ENCODE measurements at regions of chr9 and their contacts with region 1.

Region 1: DNA sequence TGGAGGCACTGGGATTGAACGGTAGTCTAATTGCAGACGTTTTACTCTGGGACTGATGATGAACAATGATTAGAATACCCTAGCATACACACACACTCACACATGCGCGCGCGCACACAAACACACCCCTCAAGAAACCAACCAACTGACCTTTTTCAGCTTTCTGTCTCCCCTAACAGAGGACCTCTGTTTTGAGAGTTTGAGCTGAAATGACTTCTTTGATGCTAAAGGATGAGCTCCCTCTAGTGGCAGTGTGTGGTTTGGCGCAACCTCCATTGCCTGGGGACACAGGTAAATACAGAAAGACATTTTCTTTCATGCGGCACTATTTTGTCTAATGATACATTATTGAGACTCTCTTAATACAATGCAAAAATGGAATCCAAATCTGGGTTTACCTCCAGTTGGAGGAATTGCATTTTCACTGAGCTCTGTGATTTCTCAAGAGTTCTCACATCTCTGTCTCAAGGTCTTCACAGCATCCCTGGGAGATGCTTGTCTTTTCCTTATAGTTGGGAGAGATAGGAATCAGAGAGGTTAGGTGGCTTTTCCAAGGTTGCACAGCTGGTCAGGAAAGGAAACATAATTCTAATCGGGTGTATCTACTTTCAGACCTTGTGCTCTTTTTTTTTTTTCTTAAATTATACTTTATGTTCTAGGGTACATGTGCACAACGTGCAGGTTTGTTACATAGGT is 187.5 kb downstream of the TMEM38B start:
- DNase-seq: peak; percentile 66
- ATAC-seq: peak; percentile 55

Region 2: DNA sequence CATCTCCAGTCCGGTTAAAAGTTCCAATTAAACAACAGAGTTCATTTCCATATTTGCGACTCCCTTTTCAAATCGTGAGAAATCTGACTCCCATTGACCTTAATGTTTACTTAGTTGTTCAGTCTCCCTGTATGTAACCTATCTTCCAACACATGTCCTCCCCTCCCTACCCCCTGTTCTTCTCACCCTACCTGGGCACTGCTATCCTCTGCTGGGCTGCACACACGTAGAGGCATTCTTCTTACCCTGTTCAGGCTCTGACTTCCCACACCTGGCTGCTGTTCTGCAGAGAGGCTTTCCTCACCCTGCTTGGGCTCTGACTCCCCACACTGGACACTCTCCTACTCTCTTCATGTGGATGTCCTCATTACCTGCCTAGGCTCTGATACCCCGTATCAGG is 271.4 kb before region 1 on chr9:
- intact Hi-C with region 1: loop called (anchors 10 kb)
- DNase-seq: no peak
- ATAC-seq: no peak

Region 3: DNA sequence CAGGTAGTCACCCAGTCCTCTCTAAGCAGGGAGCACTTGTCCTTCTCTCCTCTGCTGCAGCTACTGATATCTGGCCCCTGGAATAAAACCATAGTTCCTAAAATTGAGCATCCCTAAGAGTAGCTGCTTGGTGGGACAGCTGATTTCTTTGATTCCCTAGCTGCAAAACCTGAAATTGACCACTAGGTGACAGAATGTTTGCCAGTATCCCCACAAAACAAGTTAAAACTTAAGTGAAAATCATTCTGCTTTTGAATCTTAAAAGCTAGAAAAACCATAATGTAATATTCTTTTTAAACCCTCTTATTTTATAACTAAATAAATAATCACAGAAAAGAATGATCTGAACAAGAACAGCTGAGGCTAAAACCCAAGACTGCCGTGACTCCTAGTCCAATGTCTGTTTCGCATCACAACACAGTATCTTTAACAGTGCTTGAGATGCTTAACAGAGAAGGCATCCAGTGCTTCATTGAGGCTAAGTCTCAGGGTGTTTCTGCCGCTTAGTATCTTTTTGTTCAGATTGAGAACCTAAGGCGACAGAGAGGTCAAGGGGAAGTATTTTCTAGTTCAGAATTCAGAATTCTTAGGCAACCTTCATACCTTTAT is 243.9 kb before region 1 on chr9:
- intact Hi-C with region 1: no loop called
- DNase-seq: no peak
- ATAC-seq: no peak

Region 4: DNA sequence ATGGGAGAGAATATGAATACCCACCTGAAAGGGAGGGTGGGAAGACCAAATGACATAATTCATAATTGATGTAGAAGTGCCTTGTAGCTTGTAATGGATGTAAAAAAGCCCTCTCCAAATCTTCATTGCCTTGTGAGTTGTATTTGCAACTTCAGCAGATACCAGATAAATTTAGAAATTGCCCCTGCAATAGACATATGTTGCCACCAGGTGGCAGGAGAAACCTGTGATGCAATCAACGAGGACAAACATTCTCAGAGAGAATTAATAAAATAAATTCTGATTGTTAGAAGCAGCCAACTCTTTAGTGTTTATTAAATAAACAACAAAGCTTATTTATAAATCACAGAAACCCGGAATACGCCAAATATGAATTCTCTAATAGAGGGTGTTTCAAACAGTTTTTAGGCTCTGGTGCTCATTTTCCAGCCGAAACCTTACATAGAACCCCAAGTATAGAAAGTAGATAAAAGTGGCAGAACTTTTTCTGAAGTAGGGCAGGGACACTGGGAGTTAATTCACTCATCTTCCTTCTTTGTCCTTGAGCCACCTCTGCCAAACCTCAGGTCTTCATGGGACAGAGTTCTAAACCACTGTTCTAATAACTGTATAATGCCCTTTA is 39.7 kb before region 1 on chr9:
- intact Hi-C with region 1: loop called (anchors 5 kb)
- DNase-seq: no peak
- ATAC-seq: no peak

Region 5: GRCh38 chr9:105912860-105913501 is 31.2 kb after region 1 on chr9:
- intact Hi-C with region 1: no loop called
- DNase-seq: no peak
- ATAC-seq: no peak

Measured in Right ventricle myocardium superior (tissue), 1 donor.